Naive thymus-derived CD4-positive, alpha-beta T cell (primary cell): ENCODE measurements at regions of chr3 and their contacts with region 1.

Region 1: DNA sequence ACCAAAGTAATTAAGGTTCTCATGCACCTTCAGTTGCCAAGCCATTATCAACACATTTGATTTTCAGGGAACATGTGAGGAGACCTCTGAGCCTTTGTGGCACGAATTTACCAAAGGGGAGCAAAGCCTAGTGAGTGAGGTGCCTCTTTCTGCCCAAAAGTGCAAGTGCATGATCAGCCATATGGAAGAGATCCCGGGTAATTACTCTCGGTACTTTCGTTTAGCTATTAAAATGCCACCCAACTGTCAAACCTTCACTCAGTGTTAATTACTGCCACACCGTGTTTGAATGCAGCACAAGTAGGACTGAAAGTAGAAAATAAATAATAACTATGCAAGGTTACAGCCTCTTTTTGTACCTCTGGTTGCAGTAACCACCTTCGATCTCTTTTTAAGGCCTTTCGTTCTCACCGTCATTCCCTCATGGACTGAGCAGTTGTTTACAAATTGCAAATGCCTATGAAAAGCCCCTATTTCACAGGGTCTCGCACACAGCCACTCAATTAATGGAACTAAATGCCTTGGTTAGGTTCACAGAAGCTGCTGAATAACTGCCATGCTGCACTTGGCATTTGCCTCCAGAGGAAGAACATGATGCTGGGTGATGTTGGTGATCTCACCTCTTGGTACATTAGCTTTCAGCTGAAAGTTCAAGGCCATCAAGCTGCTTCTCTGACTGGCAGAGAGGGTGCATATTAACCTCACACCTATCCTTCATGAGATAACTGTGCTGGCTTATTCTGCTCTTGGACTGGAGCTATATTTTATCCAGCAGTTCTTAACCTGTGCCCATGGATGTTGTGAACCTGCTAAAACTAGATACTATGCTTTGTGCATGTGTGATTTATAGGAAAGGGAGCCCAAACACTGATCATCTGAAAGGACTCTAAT is 69.9 kb downstream of the TNIK start:
- DNase-seq: no peak
- ATAC-seq: no peak
- H3K4me3 ChIP-seq: no peak overlapping the region
- H3K4me3 Mint-ChIP-seq: no peak overlapping the region
- H3K27ac ChIP-seq: no peak overlapping the region
- H3K27ac Mint-ChIP-seq: no peak overlapping the region
- H3K4me1 ChIP-seq: peaks cover 1 to 3% of the 10 kb centered on the region in 2 donors
- H3K4me1 Mint-ChIP-seq: peaks cover 9 to 81% (median 70%) of the 10 kb centered on the region in 7 donors
- H3K27me3 ChIP-seq: no peaks in the 10 kb centered on the region
- H3K27me3 Mint-ChIP-seq: no peaks in the 10 kb centered on the region

Region 2: GRCh38 chr3:171375666-171376595 is 14.4 kb before region 1 on chr3:
- CTCF ChIA-PET with region 1: no interaction called
- POLR2A ChIA-PET with region 1: interaction called, 3 read pairs
- intact Hi-C with region 1: loop called in 1 of 2 experiments (anchors 2 kb)
- DNase-seq: no peak
- ATAC-seq: peak; percentile 85
- H3K4me3 ChIP-seq: no peak overlapping the region
- H3K4me3 Mint-ChIP-seq: peak overlapping the region in 3 of 10 donors; percentile 21 to 26 (median 26)
- H3K27ac ChIP-seq: no peak overlapping the region
- H3K27ac Mint-ChIP-seq: peak overlapping the region in 5 of 9 donors; percentile 3 to 56 (median 48)
- H3K4me1 ChIP-seq: peaks cover 0 to 4% of the 10 kb centered on the region in 2 donors
- H3K4me1 Mint-ChIP-seq: peaks cover 18 to 45% (median 29%) of the 10 kb centered on the region in 7 donors
- H3K27me3 ChIP-seq: no peaks in the 10 kb centered on the region
- H3K27me3 Mint-ChIP-seq: no peaks in the 10 kb centered on the region

Region 3: DNA sequence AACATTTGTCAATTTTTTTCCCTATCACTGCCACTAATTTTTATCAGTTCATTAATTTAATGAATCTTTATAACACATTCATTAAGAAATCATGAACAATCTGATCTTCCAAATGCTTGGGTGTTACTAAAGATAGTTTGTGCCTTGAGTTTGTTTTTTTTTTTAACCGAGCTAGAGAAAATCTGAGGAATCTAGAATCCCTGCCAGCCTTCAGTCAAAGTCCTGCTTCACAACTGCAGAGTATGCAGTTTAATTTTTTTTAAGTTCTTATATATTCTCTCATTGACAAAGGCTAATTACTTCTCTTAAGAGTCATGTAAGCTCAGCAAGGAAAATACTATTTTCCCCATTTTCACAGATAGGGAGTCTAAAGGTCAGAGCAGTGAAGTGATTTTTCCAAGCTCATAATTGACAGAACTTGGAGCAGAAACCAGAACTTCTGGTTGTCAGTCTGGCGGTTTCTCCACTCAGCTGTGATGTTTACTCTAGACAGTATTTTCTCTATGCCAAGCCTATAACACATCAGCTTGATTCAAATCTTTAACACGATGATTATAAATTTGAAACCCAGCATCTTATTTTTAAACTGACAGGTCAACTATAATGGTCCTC is 14.2 kb after region 1 on chr3:
- CTCF ChIA-PET with region 1: no interaction called
- POLR2A ChIA-PET with region 1: no interaction called
- intact Hi-C with region 1: loop called in 1 of 2 experiments (anchors 2 kb)
- DNase-seq: no peak
- ATAC-seq: no peak
- H3K4me3 ChIP-seq: no peak overlapping the region
- H3K4me3 Mint-ChIP-seq: no peak overlapping the region
- H3K27ac ChIP-seq: no peak overlapping the region
- H3K27ac Mint-ChIP-seq: no peak overlapping the region
- H3K4me1 ChIP-seq: peaks cover 9% of the 10 kb centered on the region in 2 donors
- H3K4me1 Mint-ChIP-seq: peaks cover 18 to 98% (median 83%) of the 10 kb centered on the region in 7 donors
- H3K27me3 ChIP-seq: no peaks in the 10 kb centered on the region
- H3K27me3 Mint-ChIP-seq: no peaks in the 10 kb centered on the region

Region 4: DNA sequence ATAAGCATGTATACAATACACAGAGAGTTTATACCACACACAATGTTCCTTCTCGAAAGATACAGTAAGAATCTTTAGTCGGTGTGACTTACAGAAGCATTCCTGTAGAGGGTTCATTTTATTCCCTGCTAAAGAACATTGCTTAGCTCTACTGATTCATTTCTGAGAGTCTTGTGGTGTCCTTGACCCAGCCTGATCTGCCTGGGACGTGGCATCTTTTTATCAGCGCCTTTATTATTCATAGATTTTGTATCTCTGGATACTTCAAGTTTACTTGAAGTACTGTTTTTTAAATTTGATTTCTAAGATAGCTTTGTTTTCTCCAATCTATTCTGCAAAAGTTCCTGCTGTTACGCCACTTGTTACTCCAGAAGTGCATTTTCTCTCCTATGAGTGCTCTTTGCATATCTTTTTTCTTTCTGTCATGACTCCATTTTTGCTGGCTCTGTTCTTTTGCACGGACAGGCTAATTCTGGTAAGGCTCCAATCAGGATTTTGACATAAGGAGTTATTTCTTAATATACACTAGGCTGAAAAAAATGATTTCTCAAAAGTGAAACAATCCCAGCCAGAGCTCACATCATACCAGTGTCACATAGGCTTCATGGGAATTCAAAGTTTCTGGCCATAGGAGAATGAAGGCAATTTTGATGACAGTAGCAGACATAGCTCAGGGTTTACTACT is 184.4 kb after region 1 on chr3:
- CTCF ChIA-PET with region 1: no interaction called
- POLR2A ChIA-PET with region 1: no interaction called
- intact Hi-C with region 1: loop called in 1 of 2 experiments (anchors 5 kb)
- DNase-seq: no peak
- ATAC-seq: no peak
- H3K4me3 ChIP-seq: no peak overlapping the region
- H3K4me3 Mint-ChIP-seq: no peak overlapping the region
- H3K27ac ChIP-seq: no peak overlapping the region
- H3K27ac Mint-ChIP-seq: no peak overlapping the region
- H3K4me1 ChIP-seq: no peaks in the 10 kb centered on the region
- H3K4me1 Mint-ChIP-seq: peaks cover 0 to 6% (median 0%) of the 10 kb centered on the region in 7 donors
- H3K27me3 ChIP-seq: no peaks in the 10 kb centered on the region
- H3K27me3 Mint-ChIP-seq: peaks cover 0 to 55% (median 8%) of the 10 kb centered on the region in 5 donors